ENCODE measurements at regions of chr2 and their contacts with region 1.

Region 1: GRCh38 chr2:160666154-160667060 is 172.8 kb upstream of the RBMS1 start:
- DNase-seq: no peak
- H3K4me3 Mint-ChIP-seq: no peak overlapping the region
- H3K27ac Mint-ChIP-seq: peak overlapping the region; percentile 36
- H3K4me1 Mint-ChIP-seq: peaks cover 21% of the 10 kb centered on the region
- H3K27me3 Mint-ChIP-seq: no peaks in the 10 kb centered on the region

Region 2: DNA sequence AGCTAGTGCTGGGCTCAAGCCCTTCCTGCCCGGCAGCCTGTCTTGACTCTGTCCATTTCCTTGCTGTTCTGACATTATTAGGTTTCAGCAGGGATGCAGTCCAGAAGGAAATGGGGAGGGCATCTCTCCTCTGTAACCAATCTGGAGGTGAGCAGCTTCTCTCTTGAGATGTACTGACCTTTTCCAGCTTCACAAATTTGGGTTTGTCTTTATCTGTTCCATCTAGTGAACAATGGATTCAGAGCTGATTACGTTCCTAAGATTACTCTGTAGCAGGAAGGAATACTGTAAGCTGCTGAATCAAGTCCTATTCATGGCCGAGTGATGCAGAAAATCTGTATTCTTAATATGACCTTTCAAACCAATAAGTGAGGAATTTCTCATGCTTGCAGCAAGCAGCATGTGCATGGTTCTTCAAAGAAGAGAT is 615.0 kb before region 1 on chr2:
- intact Hi-C with region 1: no loop called
- DNase-seq: no peak
- H3K4me3 Mint-ChIP-seq: no peak overlapping the region
- H3K27ac Mint-ChIP-seq: no peak overlapping the region
- H3K4me1 Mint-ChIP-seq: no peaks in the 10 kb centered on the region
- H3K27me3 Mint-ChIP-seq: peaks cover 5% of the 10 kb centered on the region

Region 3: GRCh38 chr2:160652236-160652635 is 14.2 kb before region 1 on chr2:
- intact Hi-C with region 1: loop called (anchors 1 kb)
- DNase-seq: peak; percentile 48
- H3K4me3 Mint-ChIP-seq: peak overlapping the region; percentile 4
- H3K27ac Mint-ChIP-seq: peak overlapping the region; percentile 27
- H3K4me1 Mint-ChIP-seq: peaks cover 20% of the 10 kb centered on the region
- H3K27me3 Mint-ChIP-seq: peaks cover 4% of the 10 kb centered on the region